ENCODE measurements at regions of chr1 and their contacts with region 1.

Region 1: GRCh38 chr1:116498789-116499628 is 71.8 kb downstream of the CD58 start:
- DNase-seq: peak; percentile 76 to 90 (median 82)
- ATAC-seq: peak; percentile 81
- H3K4me3 ChIP-seq: no peak overlapping the region
- H3K27ac ChIP-seq: peak overlapping the region; percentile 19; the same call in 2 of the 3 replicates
- H3K4me1 ChIP-seq: peaks cover 25 to 48% of the 10 kb centered on the region in 2 experiments
- H3K27me3 ChIP-seq: no peaks in the 10 kb centered on the region
- CTCF ChIP-seq: peak; percentile 91 to 98 (median 98)
- EP300 ChIP-seq: no peak; the same call in 1 of the 2 replicates
- POLR2A ChIP-seq: no peak
- RAD21 ChIP-seq: peak; percentile 98 to 99

Region 2: GRCh38 chr1:116133696-116134650 is 365.0 kb before region 1 on chr1:
- CTCF ChIA-PET with region 1: interaction called, 89 read pairs
- POLR2A ChIA-PET with region 1: interaction called, 8 read pairs
- in situ Hi-C with region 1: loop called (anchors 5 kb)
- intact Hi-C with region 1: loop called (anchors 1 kb)
- DNase-seq: peak in 2 of 4 experiments; percentile 37
- ATAC-seq: peak; percentile 37; the same call in 2 of the 3 replicates
- H3K4me3 ChIP-seq: no peak overlapping the region
- H3K27ac ChIP-seq: no peak overlapping the region
- H3K4me1 ChIP-seq: peaks cover 6 to 8% of the 10 kb centered on the region in 2 experiments; a peak in 3 of 5 replicates
- H3K27me3 ChIP-seq: peaks cover 8% of the 10 kb centered on the region in 2 experiments; a peak in 4 of 5 replicates
- CTCF ChIP-seq: peak; percentile 46 to 61 (median 52)
- EP300 ChIP-seq: no peak
- POLR2A ChIP-seq: no peak
- RAD21 ChIP-seq: peak; percentile 15 to 57; a peak in 2 of 4 replicates

Region 3: DNA sequence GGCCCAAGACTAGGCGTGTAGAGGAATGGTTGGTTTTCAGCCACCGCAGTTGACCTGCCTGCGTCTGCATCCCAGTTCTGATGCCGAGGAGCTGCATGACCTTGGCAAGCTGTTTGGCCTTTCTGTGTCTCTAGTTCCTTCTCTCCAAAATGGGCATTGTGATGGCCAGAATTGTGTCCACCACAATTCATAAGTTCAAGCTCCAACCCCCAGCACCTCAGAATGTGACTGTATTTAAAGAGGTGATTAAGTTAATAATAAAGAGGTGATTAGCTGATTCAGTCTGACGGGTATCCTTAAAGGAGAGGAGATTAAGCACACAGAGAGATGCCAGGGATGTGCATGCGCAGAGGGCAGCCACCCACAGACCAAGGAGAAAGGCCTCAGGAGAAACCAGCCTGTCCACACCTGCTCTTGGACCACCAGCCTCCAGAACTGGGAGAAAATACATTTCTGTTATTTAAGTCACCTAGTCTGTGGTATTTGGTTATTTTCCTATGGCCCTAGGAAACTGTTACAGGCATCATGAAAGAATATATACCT is 359.3 kb before region 1 on chr1:
- CTCF ChIA-PET with region 1: interaction called, 89 read pairs
- POLR2A ChIA-PET with region 1: interaction called, 8 read pairs
- in situ Hi-C with region 1: loop called (anchors 5 kb)
- intact Hi-C with region 1: loop called (anchors 1 kb)
- DNase-seq: no peak
- ATAC-seq: no peak
- H3K4me3 ChIP-seq: no peak overlapping the region
- H3K27ac ChIP-seq: no peak overlapping the region
- H3K4me1 ChIP-seq: no peaks in the 10 kb centered on the region; a peak in 1 of 5 replicates
- H3K27me3 ChIP-seq: no peaks in the 10 kb centered on the region
- CTCF ChIP-seq: no peak
- EP300 ChIP-seq: no peak
- POLR2A ChIP-seq: no peak
- RAD21 ChIP-seq: no peak

Region 4: DNA sequence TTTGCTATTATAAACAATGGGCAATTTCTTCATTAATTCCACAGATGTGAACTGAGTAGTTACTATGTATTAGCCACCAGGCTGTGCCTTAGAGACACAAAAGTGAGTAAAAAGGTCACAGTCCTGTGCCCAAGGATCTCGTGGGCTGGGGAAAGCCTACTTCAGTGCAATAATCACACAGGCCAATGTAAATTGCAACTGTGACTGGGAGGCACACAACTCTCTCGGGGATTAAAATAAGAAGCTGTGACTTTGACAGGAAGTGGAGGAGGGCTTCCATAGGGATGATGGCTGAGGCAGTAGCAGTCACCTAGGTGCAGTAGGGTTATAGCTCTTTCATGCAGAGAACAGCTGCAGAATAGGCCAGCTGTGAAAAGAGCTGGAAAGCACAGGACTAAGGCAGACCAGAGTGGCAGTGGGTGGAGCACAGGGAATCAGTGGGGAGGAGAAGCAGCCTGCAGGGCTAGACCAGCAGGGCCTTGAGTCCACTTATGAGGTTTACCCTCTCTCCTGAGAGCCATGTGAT is 266.0 kb before region 1 on chr1:
- CTCF ChIA-PET with region 1: no interaction called
- POLR2A ChIA-PET with region 1: interaction called, 3 read pairs
- in situ Hi-C with region 1: no loop called
- intact Hi-C with region 1: loop called (anchors 10 kb)
- DNase-seq: no peak
- ATAC-seq: no peak
- H3K4me3 ChIP-seq: no peak overlapping the region
- H3K27ac ChIP-seq: no peak overlapping the region
- H3K4me1 ChIP-seq: no peaks in the 10 kb centered on the region
- H3K27me3 ChIP-seq: peaks cover 18 to 36% of the 10 kb centered on the region in 2 experiments
- CTCF ChIP-seq: peak in 1 of 3 experiments; percentile 15; a peak in 1 of 6 replicates
- EP300 ChIP-seq: no peak
- POLR2A ChIP-seq: no peak
- RAD21 ChIP-seq: 0 out of 4 replicates have a peak, but pooled peaks of 1 of the 2 experiments have one; percentile 8